ENCODE measurements at regions of chr9 and their contacts with region 1.

Region 1: GRCh38 chr9:68974431-68974830 is 39.5 kb downstream of the PRKACG start:
- DNase-seq: peak; percentile 84
- ATAC-seq: peak; percentile 92
- H3K4me3 ChIP-seq: peak overlapping the region; percentile 28; the same call in 1 of the 2 replicates
- H3K27ac ChIP-seq: peak overlapping the region; percentile 66
- H3K4me1 ChIP-seq: peaks cover 36% of the 10 kb centered on the region
- H3K27me3 ChIP-seq: no peaks in the 10 kb centered on the region
- CTCF ChIP-seq: no peak
- EP300 ChIP-seq: peak; percentile 69 to 76; a peak in 2 of 4 replicates
- POLR2A ChIP-seq: no peak
- RAD21 ChIP-seq: no peak

Region 2: GRCh38 chr9:68872026-68872501 is 102.4 kb before region 1 on chr9:
- CTCF ChIA-PET with region 1: no interaction called
- POLR2A ChIA-PET with region 1: no interaction called
- RAD21 ChIA-PET with region 1: no interaction called
- SMC1A ChIA-PET with region 1: no interaction called
- in situ Hi-C with region 1: no loop called
- intact Hi-C with region 1: no loop called
- DNase-seq: no peak
- ATAC-seq: no peak
- H3K4me3 ChIP-seq: no peak overlapping the region
- H3K27ac ChIP-seq: no peak overlapping the region
- H3K4me1 ChIP-seq: no peaks in the 10 kb centered on the region
- H3K27me3 ChIP-seq: no peaks in the 10 kb centered on the region
- CTCF ChIP-seq: no peak
- EP300 ChIP-seq: no peak
- POLR2A ChIP-seq: no peak
- RAD21 ChIP-seq: no peak

Region 3: DNA sequence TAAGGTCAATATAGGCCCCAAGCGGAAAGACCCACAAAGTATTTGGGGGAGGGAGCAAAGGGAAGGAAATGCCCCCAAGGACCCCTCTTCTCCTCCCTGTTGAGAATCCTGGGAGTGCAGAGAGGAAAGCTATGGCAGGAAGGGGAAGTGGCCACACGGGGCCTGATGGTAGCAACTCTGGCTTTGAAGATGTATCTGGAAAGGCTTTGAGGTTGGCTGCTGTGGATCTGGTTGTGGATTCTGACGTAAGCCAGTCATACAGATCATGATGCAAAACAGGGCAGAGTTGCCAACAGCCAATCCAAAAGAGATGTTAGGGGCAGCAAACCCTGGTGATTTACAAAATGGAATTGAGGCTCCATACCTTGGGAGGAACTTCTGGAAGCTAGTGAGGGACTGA is 69.3 kb before region 1 on chr9:
- CTCF ChIA-PET with region 1: no interaction called
- POLR2A ChIA-PET with region 1: no interaction called
- RAD21 ChIA-PET with region 1: no interaction called
- SMC1A ChIA-PET with region 1: no interaction called
- in situ Hi-C with region 1: no loop called
- intact Hi-C with region 1: no loop called
- DNase-seq: no peak
- ATAC-seq: no peak
- H3K4me3 ChIP-seq: no peak overlapping the region
- H3K27ac ChIP-seq: no peak overlapping the region
- H3K4me1 ChIP-seq: no peaks in the 10 kb centered on the region
- H3K27me3 ChIP-seq: no peaks in the 10 kb centered on the region
- CTCF ChIP-seq: no peak
- EP300 ChIP-seq: no peak
- POLR2A ChIP-seq: no peak
- RAD21 ChIP-seq: no peak

Region 4: GRCh38 chr9:68955330-68955729 is 19.1 kb before region 1 on chr9:
- CTCF ChIA-PET with region 1: interaction called, 23 read pairs
- POLR2A ChIA-PET with region 1: interaction called, 6 read pairs
- RAD21 ChIA-PET with region 1: interaction called, 19 read pairs
- SMC1A ChIA-PET with region 1: interaction called, 33 read pairs
- in situ Hi-C with region 1: no loop called
- intact Hi-C with region 1: no loop called
- DNase-seq: no peak
- ATAC-seq: no peak
- H3K4me3 ChIP-seq: no peak overlapping the region
- H3K27ac ChIP-seq: no peak overlapping the region
- H3K4me1 ChIP-seq: peaks cover 35% of the 10 kb centered on the region
- H3K27me3 ChIP-seq: no peaks in the 10 kb centered on the region
- CTCF ChIP-seq: no peak
- EP300 ChIP-seq: no peak
- POLR2A ChIP-seq: no peak
- RAD21 ChIP-seq: no peak

Measured in GM12878 (cell line).